Activated naive CD4-positive, alpha-beta T cell treated with anti-CD3 and anti-CD28 coated beads for 36 hours (primary cell): ENCODE measurements at regions of chr4 and their contacts with region 1.

Region 1: DNA sequence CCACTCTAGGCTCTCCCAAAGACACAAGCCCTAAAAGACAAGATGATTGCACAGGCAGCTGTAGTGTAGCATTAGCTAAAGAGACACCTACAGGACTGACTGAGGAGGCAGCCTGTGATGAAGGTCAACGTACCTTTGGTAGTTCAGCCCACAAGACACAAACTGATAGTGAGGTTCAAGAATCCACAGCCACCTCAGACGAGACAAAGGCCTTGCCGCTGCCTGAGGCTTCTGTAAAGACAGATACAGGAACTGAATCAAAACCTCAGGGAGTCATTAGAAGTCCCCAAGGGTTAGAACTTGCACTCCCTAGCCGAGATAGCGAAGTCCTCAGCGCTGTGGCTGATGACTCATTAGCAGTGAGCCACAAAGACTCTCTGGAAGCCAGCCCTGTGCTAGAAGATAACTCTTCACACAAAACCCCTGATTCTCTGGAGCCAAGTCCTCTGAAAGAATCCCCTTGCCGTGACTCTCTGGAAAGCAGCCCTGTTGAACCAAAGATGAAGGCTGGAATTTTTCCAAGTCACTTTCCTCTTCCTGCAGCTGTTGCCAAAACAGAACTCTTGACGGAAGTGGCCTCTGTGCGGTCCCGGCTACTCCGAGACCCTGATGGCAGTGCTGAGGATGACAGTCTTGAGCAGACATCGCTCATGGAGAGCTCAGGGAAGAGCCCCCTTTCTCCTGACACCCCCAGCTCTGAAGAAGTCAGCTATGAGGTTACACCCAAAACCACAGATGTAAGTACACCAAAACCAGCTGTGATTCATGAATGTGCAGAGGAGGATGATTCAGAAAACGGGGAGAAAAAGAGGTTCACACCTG is 306.3 kb downstream of the ANK2 start:
- DNase-seq: peak; percentile 91
- H3K4me3 Mint-ChIP-seq: peak overlapping the region; percentile 59
- H3K27ac Mint-ChIP-seq: peak overlapping the region; percentile 98
- H3K4me1 Mint-ChIP-seq: peaks cover 39% of the 10 kb centered on the region
- H3K27me3 Mint-ChIP-seq: peaks cover 42% of the 10 kb centered on the region

Region 2: GRCh38 chr4:112636688-112637551 is 718.8 kb before region 1 on chr4 and contains the starts of genes LARP7 and ZGRF1:
- CTCF ChIA-PET with region 1: no interaction called
- intact Hi-C with region 1: loop called (anchors 2 kb)
- DNase-seq: peak; percentile 99
- H3K4me3 Mint-ChIP-seq: no peak within 1 kb of the TSS
- H3K27ac Mint-ChIP-seq: peak within 1 kb of the TSS; percentile 16
- H3K4me1 Mint-ChIP-seq: peaks cover 27% of the 10 kb centered on the region
- H3K27me3 Mint-ChIP-seq: no peaks in the 10 kb centered on the region
- total RNA-seq, gene LARP7: 41.5 to 41.9 TPM
- total RNA-seq, gene ZGRF1: 40.0 to 43.0 TPM

Region 3: GRCh38 chr4:113278324-113278934 is 77.3 kb before region 1 on chr4:
- CTCF ChIA-PET with region 1: interaction called, 4 read pairs
- intact Hi-C with region 1: loop called (anchors 1 kb)
- DNase-seq: peak; percentile 88
- H3K4me3 Mint-ChIP-seq: no peak overlapping the region
- H3K27ac Mint-ChIP-seq: no peak overlapping the region
- H3K4me1 Mint-ChIP-seq: no peaks in the 10 kb centered on the region
- H3K27me3 Mint-ChIP-seq: peaks cover 15% of the 10 kb centered on the region

Region 4: GRCh38 chr4:113328514-113328913 is 27.2 kb before region 1 on chr4:
- CTCF ChIA-PET with region 1: interaction called, 3 read pairs
- intact Hi-C with region 1: loop called (anchors 1 kb)
- DNase-seq: peak; percentile 13
- H3K4me3 Mint-ChIP-seq: no peak overlapping the region
- H3K27ac Mint-ChIP-seq: no peak overlapping the region
- H3K4me1 Mint-ChIP-seq: no peaks in the 10 kb centered on the region
- H3K27me3 Mint-ChIP-seq: peaks cover 6% of the 10 kb centered on the region

Region 5: GRCh38 chr4:113435893-113436292 is 80.1 kb after region 1 on chr4:
- CTCF ChIA-PET with region 1: no interaction called
- intact Hi-C with region 1: no loop called
- DNase-seq: peak; percentile 36
- H3K4me3 Mint-ChIP-seq: no peak overlapping the region
- H3K27ac Mint-ChIP-seq: no peak overlapping the region
- H3K4me1 Mint-ChIP-seq: peaks cover 14% of the 10 kb centered on the region
- H3K27me3 Mint-ChIP-seq: no peaks in the 10 kb centered on the region

Region 6: DNA sequence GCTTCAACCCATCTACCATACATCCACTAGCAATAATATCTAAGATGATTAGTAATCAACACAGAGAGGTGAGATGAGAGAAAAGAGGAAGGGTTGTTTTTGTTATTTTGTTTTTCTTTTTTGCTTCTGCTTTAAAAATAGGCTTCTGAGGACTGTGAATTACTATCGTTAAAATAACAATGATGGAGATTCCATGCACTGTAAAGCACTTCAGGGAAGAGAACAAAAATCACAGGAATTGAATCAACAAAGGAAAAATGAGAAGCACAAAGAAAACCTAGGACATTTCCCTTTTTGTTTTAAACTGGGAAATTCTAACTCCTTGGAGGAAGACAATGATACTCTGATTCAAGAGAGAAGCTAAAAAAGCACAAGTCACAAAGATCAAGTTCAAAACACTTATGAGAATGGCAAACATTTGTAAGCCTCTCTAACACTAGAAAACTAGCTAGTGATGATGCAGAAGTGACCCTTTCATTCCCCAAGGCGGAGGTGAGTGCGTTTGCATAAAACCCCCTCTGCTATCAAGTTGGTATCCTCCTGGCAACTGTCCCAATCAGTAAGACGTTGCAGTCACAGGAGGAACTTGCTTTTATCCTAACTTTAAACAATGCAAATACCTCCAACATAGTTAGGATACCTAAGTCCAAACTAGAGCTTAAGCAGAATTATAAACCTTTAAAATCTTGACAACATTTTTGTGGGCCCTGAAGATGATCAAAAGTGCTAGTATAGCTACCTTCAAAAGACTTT is 97.3 kb after region 1 on chr4:
- CTCF ChIA-PET with region 1: no interaction called
- intact Hi-C with region 1: no loop called
- DNase-seq: no peak
- H3K4me3 Mint-ChIP-seq: no peak overlapping the region
- H3K27ac Mint-ChIP-seq: no peak overlapping the region
- H3K4me1 Mint-ChIP-seq: peaks cover 12% of the 10 kb centered on the region
- H3K27me3 Mint-ChIP-seq: no peaks in the 10 kb centered on the region

Region 7: DNA sequence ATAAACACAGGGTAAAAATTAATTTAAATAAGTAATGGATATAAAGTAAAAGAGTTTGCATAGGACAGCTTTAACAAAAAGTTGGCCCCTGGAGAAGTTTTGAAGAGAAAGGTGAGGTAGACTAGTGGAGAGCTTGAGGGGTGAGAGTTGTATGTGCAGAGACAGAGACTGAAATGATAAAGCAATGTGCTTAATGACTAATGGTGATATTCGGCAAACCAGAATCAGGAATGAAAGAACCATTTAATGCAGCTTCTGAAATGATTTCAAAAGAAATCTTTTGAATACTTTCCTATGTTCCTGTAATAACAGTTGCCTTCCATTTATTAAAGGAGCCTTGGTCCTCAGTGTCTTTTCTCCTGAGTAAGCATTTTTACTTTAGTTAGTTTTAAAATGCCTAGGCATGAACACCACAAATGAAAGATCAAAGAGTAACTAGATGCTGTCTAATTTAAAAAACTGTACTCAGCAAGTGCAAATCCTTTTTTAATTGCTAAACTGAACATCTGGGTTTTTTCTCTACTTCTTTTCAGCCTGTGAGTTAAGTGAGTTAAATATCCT is 377.3 kb after region 1 on chr4:
- CTCF ChIA-PET with region 1: no interaction called
- intact Hi-C with region 1: loop called (anchors 1 kb)
- DNase-seq: no peak
- H3K4me3 Mint-ChIP-seq: no peak overlapping the region
- H3K27ac Mint-ChIP-seq: peak overlapping the region; percentile 59
- H3K4me1 Mint-ChIP-seq: peaks cover 73% of the 10 kb centered on the region
- H3K27me3 Mint-ChIP-seq: no peaks in the 10 kb centered on the region

Region 8: DNA sequence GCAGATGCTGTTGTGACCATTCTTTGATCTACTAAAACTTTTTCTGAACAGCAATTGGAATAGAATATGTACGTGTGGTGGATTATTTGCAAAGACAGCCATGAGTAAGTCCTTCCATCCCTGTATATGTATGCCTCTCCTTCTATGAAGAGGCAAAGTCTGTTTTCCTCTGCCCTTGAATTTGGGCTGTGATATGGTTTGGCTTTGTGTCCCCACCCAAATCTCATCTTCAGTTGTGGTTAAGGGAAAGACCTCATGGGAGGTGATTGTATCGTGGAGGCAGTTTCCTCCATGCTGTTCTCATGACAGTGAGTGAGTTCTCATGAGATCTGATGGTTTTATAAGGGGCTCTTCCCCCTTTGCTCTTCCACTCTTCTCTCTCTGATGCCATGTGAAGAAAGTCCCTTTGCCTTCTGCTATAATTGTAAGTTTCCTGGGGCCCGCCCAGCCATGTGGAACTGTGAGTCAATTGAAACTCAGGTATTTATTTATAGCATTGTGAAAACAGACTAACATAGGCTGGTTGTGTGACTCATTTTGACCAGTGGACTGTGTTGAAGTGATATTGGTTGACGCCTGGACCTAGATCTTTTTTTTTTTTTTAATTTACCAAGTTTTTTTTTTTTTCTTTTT is 514.1 kb after region 1 on chr4:
- CTCF ChIA-PET with region 1: no interaction called
- intact Hi-C with region 1: loop called (anchors 1 kb)
- DNase-seq: peak; percentile 80
- H3K4me3 Mint-ChIP-seq: no peak overlapping the region
- H3K27ac Mint-ChIP-seq: peak overlapping the region; percentile 82
- H3K4me1 Mint-ChIP-seq: peaks cover 19% of the 10 kb centered on the region
- H3K27me3 Mint-ChIP-seq: no peaks in the 10 kb centered on the region

Region 9: GRCh38 chr4:113969709-113970334 is 614.1 kb after region 1 on chr4:
- CTCF ChIA-PET with region 1: no interaction called
- intact Hi-C with region 1: no loop called
- DNase-seq: no peak
- H3K4me3 Mint-ChIP-seq: no peak overlapping the region
- H3K27ac Mint-ChIP-seq: no peak overlapping the region
- H3K4me1 Mint-ChIP-seq: no peaks in the 10 kb centered on the region
- H3K27me3 Mint-ChIP-seq: no peaks in the 10 kb centered on the region